ENCODE measurements at regions of chr17 and their contacts with region 1.

Region 1: DNA sequence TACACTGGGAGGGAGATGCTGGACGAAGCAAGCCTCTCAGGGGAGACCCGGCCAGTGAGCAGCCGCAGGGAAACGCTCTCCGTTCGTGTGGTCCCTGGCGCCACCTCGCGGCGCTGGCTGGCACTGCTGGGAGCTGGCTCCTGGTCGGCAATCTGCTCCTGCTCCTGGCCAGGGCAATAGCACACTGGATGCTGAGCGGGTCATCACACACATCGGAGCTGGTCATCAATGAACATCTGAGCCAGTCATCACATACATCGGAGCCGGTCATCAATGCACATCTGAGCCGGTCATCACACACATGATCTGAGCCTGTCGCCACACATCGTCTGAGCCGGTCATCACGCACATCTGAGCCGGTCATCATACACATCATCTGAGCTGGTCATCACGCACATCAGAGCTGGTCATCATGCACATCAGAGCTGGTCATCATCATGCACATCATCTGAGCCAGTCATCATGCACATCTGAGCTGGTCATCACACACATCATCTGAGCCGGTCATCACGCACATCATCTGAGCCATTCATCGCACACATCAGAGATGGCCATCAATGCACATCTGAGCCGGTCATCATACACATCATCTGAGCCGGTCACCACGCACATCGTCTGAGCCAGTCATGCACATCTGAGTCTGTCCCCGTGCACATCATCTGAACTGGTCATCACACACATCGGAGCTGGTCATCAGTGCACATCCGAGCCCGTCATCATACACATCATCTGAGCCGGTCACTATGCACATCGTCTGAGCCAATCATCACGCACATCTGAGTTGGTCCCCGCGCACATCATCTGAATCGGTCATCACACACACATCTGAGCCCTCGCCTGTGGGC is 217.3 kb downstream of the RBFOX3 start:
- DNase-seq: peak; percentile 74 to 83
- ATAC-seq: peak; percentile 72 to 87 (median 80)
- H3K4me3 ChIP-seq: no peak overlapping the region
- H3K27ac ChIP-seq: no peak overlapping the region
- H3K4me1 ChIP-seq: peaks cover 0 to 3% (median 0%) of the 10 kb centered on the region in 9 donors
- H3K27me3 ChIP-seq: peaks cover 0 to 99% (median 90%) of the 10 kb centered on the region in 7 donors
- CTCF ChIP-seq: peak; percentile 74 to 94 (median 91)

Region 2: GRCh38 chr17:78979780-78980623 is 413.6 kb before region 1 on chr17 and contains the start of gene LGALS3BP:
- intact Hi-C with region 1: loop called in 1 of 10 experiments (anchors 10 kb)
- DNase-seq: peak; percentile 82 to 83
- ATAC-seq: peak; percentile 68 to 88 (median 80)
- H3K4me3 ChIP-seq: peak within 1 kb of the TSS in 9 of 10 donors; percentile 30 to 65 (median 49)
- H3K27ac ChIP-seq: peak within 1 kb of the TSS in 9 of 10 donors; percentile 58 to 85 (median 80)
- H3K4me1 ChIP-seq: peaks cover 27 to 56% (median 53%) of the 10 kb centered on the region in 9 donors
- H3K27me3 ChIP-seq: no peaks in the 10 kb centered on the region
- CTCF ChIP-seq: no peak
- total RNA-seq, gene LGALS3BP: 362 to 852 (median 568) TPM

Region 3: GRCh38 chr17:79009397-79010308 is 383.9 kb before region 1 on chr17 and contains the start of gene CANT1:
- intact Hi-C with region 1: loop called in 3 of 10 experiments (anchors 10 kb)
- DNase-seq: peak; percentile 81 to 89
- ATAC-seq: peak; percentile 94 to 98 (median 96)
- H3K4me3 ChIP-seq: peak within 1 kb of the TSS; percentile 65 to 92 (median 74)
- H3K27ac ChIP-seq: peak within 1 kb of the TSS; percentile 79 to 96 (median 92)
- H3K4me1 ChIP-seq: peaks cover 8 to 49% (median 42%) of the 10 kb centered on the region in 9 donors
- H3K27me3 ChIP-seq: no peaks in the 10 kb centered on the region
- CTCF ChIP-seq: no peak
- total RNA-seq, gene CANT1: 19.9 to 33.4 (median 24.4) TPM

Region 4: GRCh38 chr17:79045842-79046196 is 347.8 kb before region 1 on chr17:
- intact Hi-C with region 1: loop called in 5 of 10 experiments (anchors 2 to 10 kb)
- DNase-seq: peak; percentile 72 to 80
- ATAC-seq: peak; percentile 27 to 86 (median 69)
- H3K4me3 ChIP-seq: peak overlapping the region in 3 of 10 donors; percentile 16 to 22 (median 20)
- H3K27ac ChIP-seq: peak overlapping the region in 9 of 10 donors; percentile 33 to 84 (median 69)
- H3K4me1 ChIP-seq: peaks cover 15 to 48% (median 32%) of the 10 kb centered on the region in 9 donors
- H3K27me3 ChIP-seq: no peaks in the 10 kb centered on the region
- CTCF ChIP-seq: peak; percentile 93 to 98 (median 96)

Region 5: DNA sequence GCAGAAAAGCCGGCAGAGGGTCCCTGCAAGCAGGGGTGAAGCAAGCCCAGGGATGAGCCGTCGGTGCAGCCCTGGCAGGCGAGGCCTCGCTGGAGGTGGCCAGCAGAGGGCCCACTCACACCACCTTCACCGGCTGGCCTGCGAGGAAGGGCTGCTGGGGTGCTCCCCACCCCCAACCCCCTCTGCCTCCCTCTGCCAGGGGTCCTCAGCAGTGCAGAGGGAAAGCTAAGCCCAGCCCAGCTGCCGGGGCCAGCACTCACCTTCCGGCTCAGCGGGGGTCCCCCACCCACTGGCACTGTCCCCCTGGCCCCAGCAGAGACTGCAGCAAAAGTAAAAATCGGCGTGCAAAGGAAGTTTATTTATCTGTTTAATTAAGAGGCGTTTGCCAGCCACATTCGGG is 205.5 kb before region 1 on chr17:
- intact Hi-C with region 1: loop called (anchors 1 to 5 kb)
- DNase-seq: no peak
- ATAC-seq: peak in 4 of 8 donors; percentile 33 to 65 (median 60)
- H3K4me3 ChIP-seq: no peak overlapping the region
- H3K27ac ChIP-seq: no peak overlapping the region
- H3K4me1 ChIP-seq: peaks cover 0 to 8% (median 6%) of the 10 kb centered on the region in 9 donors
- H3K27me3 ChIP-seq: peaks cover 5 to 100% (median 98%) of the 10 kb centered on the region in 7 donors
- CTCF ChIP-seq: peak in 8 of 9 donors; percentile 13 to 60 (median 50)

Region 6: DNA sequence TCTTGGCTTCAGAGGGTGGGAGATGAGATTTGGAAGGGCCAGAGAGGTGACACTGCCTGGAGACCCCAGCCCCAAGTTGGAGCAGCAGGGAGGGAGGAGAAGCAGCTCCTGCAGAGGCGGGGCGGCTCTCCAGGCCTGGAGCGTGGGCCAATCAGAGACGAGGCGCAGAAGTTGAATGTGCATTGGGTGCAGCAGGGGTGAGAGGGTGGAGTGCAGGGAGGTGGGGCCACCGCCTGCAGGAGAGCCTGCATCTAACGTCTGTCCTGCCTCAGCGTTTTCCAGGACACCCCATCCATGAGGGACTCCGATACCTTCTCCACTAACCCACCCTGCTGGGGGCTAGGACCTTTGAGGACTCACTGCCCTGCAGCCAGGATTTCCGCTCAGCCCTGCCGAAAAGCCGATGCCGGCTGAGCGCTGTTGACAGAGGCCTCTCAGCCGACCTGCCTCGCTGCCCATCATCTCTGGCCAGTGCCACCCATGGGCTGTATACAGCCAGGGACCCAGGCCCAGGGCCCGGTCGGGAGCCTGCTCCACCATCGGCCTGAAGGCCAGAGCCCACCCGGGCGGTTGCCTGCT is 172.8 kb before region 1 on chr17:
- intact Hi-C with region 1: no loop called
- DNase-seq: no peak
- ATAC-seq: peak in 1 of 8 donors; percentile 33
- H3K4me3 ChIP-seq: no peak overlapping the region
- H3K27ac ChIP-seq: no peak overlapping the region
- H3K4me1 ChIP-seq: peaks cover 0 to 12% (median 0%) of the 10 kb centered on the region in 9 donors
- H3K27me3 ChIP-seq: peaks cover 7 to 100% (median 97%) of the 10 kb centered on the region in 7 donors
- CTCF ChIP-seq: no peak

Region 7: DNA sequence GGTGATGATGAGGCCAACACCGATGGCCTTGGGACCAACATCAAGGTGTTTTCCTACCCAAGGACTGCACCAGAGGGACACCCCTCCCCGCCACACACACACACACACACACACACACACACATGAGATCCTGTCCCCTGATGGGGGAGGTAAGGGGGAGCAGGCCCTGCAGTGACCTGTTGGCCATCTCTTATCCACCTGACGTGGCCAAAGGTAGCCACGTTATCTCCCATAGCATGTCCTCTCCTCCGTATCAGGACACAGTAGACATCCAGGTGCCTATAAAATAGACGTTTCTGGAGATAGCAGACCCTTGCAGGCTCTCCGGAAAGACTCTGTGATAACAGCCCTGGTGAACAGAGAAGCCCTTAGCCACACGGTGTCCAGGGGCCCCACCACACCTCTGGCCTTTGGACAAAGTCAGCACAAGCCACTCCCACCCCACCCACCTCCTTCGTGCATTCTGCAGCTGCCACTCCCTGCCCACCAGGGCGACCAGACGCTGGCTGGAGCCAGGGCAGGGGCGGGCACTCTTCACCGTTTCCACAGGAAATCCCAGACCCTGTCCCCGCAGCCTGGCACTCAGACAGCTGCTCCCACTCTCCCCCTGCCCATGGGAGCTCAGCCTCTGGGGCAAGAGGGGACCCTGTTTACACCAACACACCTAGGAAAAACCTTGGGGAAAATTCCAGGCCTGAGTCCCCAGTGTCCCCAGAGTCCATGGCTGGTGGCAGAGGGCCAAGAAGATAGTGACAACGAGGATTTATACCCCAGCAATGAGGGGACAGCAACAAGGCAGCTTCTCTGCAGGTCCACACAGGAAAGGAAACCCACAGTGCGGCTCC is 321.7 kb after region 1 on chr17:
- intact Hi-C with region 1: loop called in 1 of 10 experiments (anchors 5 kb)
- DNase-seq: no peak
- ATAC-seq: no peak
- H3K4me3 ChIP-seq: no peak overlapping the region
- H3K27ac ChIP-seq: no peak overlapping the region
- H3K4me1 ChIP-seq: no peaks in the 10 kb centered on the region
- H3K27me3 ChIP-seq: peaks cover 0 to 55% (median 20%) of the 10 kb centered on the region in 7 donors
- CTCF ChIP-seq: no peak